Activated B cell treated with CpG ODN at 0.5 μM for 24 hours (primary cell): ENCODE measurements at regions of chr10 and their contacts with region 1.

Region 1: DNA sequence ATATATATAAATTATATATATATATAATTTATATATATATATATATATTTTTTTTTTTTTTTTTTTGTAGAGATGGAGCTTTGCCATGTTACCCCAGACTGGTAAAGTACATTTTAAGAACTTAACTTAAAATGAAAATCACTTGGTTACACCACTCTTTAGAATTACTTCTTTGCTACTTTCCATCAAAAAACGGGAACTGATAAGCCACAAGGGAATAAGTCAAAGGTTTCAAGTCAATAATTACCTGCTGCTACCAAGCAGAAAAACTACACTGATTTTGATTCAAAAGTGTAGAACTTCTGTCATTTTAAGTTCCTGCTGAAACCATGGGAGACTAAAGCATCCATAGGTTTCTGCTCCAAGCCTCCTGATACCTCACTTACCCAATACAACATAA is 12.2 kb downstream of the PPA1 start:
- DNase-seq: no peak
- ATAC-seq: peak; percentile 42
- H3K4me3 Mint-ChIP-seq: peak overlapping the region; percentile 25
- H3K27ac Mint-ChIP-seq: no peak overlapping the region
- H3K4me1 Mint-ChIP-seq: peaks cover 17% of the 10 kb centered on the region
- H3K27me3 Mint-ChIP-seq: no peaks in the 10 kb centered on the region
- CTCF ChIP-seq: no peak

Region 2: GRCh38 chr10:70267161-70267933 is 46.3 kb after region 1 on chr10:
- CTCF ChIA-PET with region 1: interaction called, 38 read pairs
- POLR2A ChIA-PET with region 1: interaction called, 7 read pairs
- intact Hi-C with region 1: loop called (anchors 1 kb)
- DNase-seq: no peak
- ATAC-seq: peak; percentile 31
- H3K4me3 Mint-ChIP-seq: no peak overlapping the region
- H3K27ac Mint-ChIP-seq: no peak overlapping the region
- H3K4me1 Mint-ChIP-seq: peaks cover 8% of the 10 kb centered on the region
- H3K27me3 Mint-ChIP-seq: peaks cover 13% of the 10 kb centered on the region
- CTCF ChIP-seq: no peak

Region 3: DNA sequence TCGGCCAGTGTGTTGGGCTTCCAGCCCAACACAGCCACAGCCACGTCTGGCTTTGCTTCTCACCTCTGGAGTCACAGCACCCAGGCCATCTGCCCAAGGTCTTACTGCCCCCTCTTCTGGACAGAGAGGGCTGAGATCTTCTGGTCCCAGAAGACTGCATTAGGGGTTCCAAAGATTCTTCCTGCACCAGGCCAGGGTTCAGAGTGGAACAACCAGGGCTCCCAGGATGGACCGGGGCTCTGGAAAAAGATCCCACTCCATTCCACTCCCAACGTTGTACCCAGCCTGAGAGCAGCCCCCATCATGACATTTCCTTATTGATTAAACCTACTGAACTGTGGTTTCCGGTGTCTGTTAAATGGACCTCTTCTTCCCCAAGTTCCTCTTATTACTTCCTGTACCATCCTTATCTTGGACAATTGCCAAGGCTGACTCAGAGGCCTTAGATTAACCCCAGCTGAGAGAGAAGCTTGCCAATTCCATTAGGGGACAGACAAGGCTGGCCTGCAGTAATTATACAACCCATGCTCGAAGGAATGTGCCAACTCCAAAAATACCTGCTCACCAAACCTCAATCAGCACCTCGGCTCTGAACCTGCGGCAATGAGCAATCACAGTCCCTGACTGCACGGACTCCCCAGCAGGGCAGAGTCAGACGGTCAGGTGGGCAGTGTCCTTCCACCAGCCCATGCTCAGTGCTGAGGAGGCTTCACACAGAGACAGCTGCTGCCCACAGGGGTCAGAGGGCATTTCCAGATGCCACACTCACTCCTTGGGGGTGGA is 110.6 kb after region 1 on chr10:
- CTCF ChIA-PET with region 1: interaction called, 13 read pairs
- POLR2A ChIA-PET with region 1: interaction called, 4 read pairs
- intact Hi-C with region 1: no loop called
- DNase-seq: no peak
- ATAC-seq: peak; percentile 81
- H3K4me3 Mint-ChIP-seq: peak overlapping the region; percentile 56
- H3K27ac Mint-ChIP-seq: peak overlapping the region; percentile 63
- H3K4me1 Mint-ChIP-seq: peaks cover 30% of the 10 kb centered on the region
- H3K27me3 Mint-ChIP-seq: peaks cover 26% of the 10 kb centered on the region
- CTCF ChIP-seq: no peak

Region 4: GRCh38 chr10:70355051-70356021 is 134.3 kb after region 1 on chr10:
- CTCF ChIA-PET with region 1: interaction called, 25 read pairs
- POLR2A ChIA-PET with region 1: interaction called, 4 read pairs
- intact Hi-C with region 1: no loop called
- DNase-seq: peak; percentile 36
- ATAC-seq: peak; percentile 78
- H3K4me3 Mint-ChIP-seq: peak overlapping the region; percentile 86
- H3K27ac Mint-ChIP-seq: peak overlapping the region; percentile 94
- H3K4me1 Mint-ChIP-seq: peaks cover 40% of the 10 kb centered on the region
- H3K27me3 Mint-ChIP-seq: no peaks in the 10 kb centered on the region
- CTCF ChIP-seq: no peak

Region 5: GRCh38 chr10:70391654-70392053 is 170.6 kb after region 1 on chr10:
- CTCF ChIA-PET with region 1: interaction called, 10 read pairs
- POLR2A ChIA-PET with region 1: no interaction called
- intact Hi-C with region 1: no loop called
- DNase-seq: no peak
- ATAC-seq: no peak
- H3K4me3 Mint-ChIP-seq: no peak overlapping the region
- H3K27ac Mint-ChIP-seq: no peak overlapping the region
- H3K4me1 Mint-ChIP-seq: peaks cover 5% of the 10 kb centered on the region
- H3K27me3 Mint-ChIP-seq: peaks cover 11% of the 10 kb centered on the region
- CTCF ChIP-seq: no peak

Region 6: GRCh38 chr10:70461215-70461986 is 240.4 kb after region 1 on chr10:
- CTCF ChIA-PET with region 1: interaction called, 13 read pairs
- POLR2A ChIA-PET with region 1: no interaction called
- intact Hi-C with region 1: loop called (anchors 1 kb)
- DNase-seq: peak; percentile 44
- ATAC-seq: peak; percentile 75
- H3K4me3 Mint-ChIP-seq: no peak overlapping the region
- H3K27ac Mint-ChIP-seq: no peak overlapping the region
- H3K4me1 Mint-ChIP-seq: peaks cover 19% of the 10 kb centered on the region
- H3K27me3 Mint-ChIP-seq: peaks cover 26% of the 10 kb centered on the region
- CTCF ChIP-seq: peak; percentile 70

Region 7: DNA sequence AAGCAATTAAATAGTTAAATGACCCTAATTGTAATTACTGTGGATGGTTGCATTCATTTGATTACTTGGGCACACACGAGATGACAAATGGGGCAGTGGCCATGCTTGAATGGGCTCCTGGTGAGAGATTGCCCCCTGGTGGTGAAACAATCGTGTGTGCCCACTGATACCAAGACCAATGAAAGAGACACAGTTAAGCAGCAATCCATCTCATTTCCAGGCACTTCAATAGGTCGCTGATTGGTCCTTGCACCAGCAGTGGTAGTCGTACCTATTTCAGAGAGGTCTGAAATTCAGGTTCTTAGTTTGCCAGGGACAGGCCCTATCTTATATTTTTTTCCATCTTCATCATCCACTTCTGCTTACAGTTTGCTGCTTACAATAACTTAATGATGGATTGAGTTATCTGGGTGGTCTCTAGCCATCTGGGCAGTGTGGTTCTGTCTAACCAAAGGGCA is 659.1 kb after region 1 on chr10:
- CTCF ChIA-PET with region 1: no interaction called
- POLR2A ChIA-PET with region 1: no interaction called
- intact Hi-C with region 1: loop called (anchors 5 kb)
- DNase-seq: peak; percentile 40
- ATAC-seq: peak; percentile 96
- H3K4me3 Mint-ChIP-seq: no peak overlapping the region
- H3K27ac Mint-ChIP-seq: peak overlapping the region; percentile 25
- H3K4me1 Mint-ChIP-seq: peaks cover 4% of the 10 kb centered on the region
- H3K27me3 Mint-ChIP-seq: no peaks in the 10 kb centered on the region
- CTCF ChIP-seq: peak; percentile 84